Activated T-helper 1 cell treated with anti-CD3 and anti-CD28 coated beads, Interleukin-12 subunit alpha, Interleukin-12 subunit beta, Interleukin-2, Interleukin-4 antibody, amounts not matched to agents 30 ng/mL and 10 ng/mL and 1 ng/mL, durations not matched to agents 14 hours and 24 hours and 36 hours (primary cell): ENCODE measurements at regions of chr15 and their contacts with region 1.

Region 1: DNA sequence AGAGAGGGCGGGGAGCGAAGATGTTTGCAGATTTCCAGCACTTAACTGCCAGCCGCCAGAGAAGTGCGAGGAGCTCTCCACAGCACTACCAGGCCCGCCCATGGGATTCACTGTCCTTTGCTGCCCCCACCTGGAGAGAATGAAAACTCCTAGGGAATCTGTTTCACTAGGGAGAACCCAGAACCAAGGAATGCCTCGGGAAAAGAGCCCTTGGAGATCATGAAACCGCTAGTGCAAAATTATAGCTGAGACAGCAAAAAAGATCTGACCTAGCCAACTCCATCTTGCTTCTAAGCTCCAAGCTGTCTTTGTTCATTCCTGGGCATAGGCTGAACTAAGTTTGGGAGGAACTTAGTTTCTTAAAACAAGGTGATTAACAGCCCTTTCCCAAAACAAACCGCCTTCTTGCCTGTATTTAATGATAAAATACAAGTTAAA is 82.6 kb upstream of the GCNT3 start:
- DNase-seq: peak; percentile 56
- H3K4me3 Mint-ChIP-seq: no peak overlapping the region
- H3K27ac Mint-ChIP-seq: no peak overlapping the region
- H3K4me1 Mint-ChIP-seq: peaks cover 21% of the 10 kb centered on the region
- H3K27me3 Mint-ChIP-seq: peaks cover 7% of the 10 kb centered on the region

Region 2: GRCh38 chr15:58043192-58043903 is 1485.6 kb before region 1 on chr15:
- intact Hi-C with region 1: loop called (anchors 5 kb)
- DNase-seq: no peak
- H3K4me3 Mint-ChIP-seq: no peak overlapping the region
- H3K27ac Mint-ChIP-seq: no peak overlapping the region
- H3K4me1 Mint-ChIP-seq: no peaks in the 10 kb centered on the region
- H3K27me3 Mint-ChIP-seq: peaks cover 24% of the 10 kb centered on the region

Region 3: DNA sequence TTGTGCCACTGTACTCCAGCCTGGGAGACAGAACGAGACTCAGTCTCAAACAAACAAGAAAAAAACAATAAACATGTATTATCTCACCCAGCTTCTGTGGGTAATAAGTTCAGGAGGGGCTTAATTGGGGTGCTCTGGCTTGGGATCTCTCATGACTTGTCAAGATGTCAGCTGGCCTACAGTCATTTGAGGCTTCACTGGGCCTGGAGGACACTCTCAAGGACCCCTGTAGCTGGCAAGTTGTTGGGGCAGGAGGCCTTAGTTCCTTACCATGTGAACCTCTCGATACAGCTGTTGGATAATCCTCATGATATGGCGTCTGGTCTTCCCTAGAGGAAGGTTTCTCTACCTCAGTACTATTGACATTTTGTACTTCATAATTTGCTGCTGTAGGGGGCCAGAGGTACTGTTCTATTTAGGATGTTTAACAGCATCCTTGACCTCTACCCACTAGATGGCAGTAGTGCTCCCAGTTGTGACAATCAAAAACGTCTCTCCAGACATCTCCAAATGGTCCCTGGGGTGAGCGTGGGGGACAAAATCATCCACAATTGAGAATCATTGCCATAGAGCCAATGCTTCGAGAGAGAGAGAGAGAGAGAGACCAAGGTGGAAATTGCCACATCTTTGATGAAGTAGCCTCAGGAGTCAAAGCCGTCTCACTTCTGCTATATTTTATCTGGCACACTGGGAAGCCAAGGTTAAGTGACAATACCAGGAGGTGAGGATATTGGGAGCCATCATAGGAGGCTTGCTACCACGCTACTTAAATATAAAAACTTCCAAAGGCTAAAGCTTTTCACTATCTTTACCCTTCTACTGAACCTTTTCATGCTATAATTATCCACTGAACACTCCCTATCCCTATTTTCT is 571.6 kb before region 1 on chr15:
- intact Hi-C with region 1: loop called (anchors 1 kb)
- DNase-seq: peak; percentile 45
- H3K4me3 Mint-ChIP-seq: no peak overlapping the region
- H3K27ac Mint-ChIP-seq: no peak overlapping the region
- H3K4me1 Mint-ChIP-seq: peaks cover 17% of the 10 kb centered on the region
- H3K27me3 Mint-ChIP-seq: peaks cover 11% of the 10 kb centered on the region

Region 4: DNA sequence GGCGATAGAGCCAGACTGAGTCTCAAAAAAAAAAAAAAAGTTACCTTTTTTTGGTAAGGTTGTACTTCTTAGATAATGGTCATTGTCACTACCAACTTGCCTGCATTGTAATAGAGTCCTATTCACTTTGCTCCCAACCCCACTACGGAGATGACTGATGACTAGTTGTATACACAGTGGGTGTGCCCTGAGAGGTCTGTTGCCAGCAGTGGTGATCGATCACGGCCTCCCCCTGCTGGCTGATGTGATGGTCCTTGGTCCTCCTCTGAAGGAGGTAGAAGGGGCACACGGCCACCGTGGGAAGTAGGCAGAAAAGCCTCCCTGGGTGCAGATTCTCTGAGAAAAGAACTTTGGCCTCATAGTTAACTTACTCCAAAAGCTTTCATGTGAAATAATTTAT is 93.3 kb after region 1 on chr15:
- intact Hi-C with region 1: loop called (anchors 1 kb)
- DNase-seq: peak; percentile 11
- H3K4me3 Mint-ChIP-seq: no peak overlapping the region
- H3K27ac Mint-ChIP-seq: no peak overlapping the region
- H3K4me1 Mint-ChIP-seq: no peaks in the 10 kb centered on the region
- H3K27me3 Mint-ChIP-seq: peaks cover 17% of the 10 kb centered on the region

Region 5: DNA sequence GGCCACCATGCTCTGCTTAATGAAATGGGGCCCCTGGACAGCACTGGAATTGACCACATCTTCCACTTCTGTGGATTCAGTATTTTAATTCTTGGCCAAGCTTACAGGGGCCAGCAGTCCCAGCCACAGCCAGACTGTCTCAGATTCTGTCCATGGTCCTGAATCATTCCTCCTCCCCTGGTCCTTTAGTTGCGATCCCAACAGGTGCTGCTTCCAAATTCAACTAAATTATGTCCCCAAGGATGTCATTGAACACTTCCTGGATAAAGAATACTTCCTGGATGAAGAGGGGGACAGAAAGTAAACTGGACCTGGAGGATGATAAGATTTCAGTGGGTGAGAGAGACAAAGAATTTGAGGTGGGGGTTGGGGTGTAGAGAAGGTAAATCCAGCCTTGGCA is 364.0 kb after region 1 on chr15:
- intact Hi-C with region 1: no loop called
- DNase-seq: no peak
- H3K4me3 Mint-ChIP-seq: no peak overlapping the region
- H3K27ac Mint-ChIP-seq: no peak overlapping the region
- H3K4me1 Mint-ChIP-seq: no peaks in the 10 kb centered on the region
- H3K27me3 Mint-ChIP-seq: no peaks in the 10 kb centered on the region